B cell (primary cell): ENCODE measurements at regions of chr22 and their contacts with region 1.

Region 1: GRCh38 chr22:32676196-32676595 is 125.3 kb upstream of the TIMP3 start:
- DNase-seq: no peak
- ATAC-seq: no peak
- H3K4me3 ChIP-seq: no peak overlapping the region
- H3K4me3 Mint-ChIP-seq: no peak overlapping the region
- H3K27ac ChIP-seq: no peak overlapping the region
- H3K27ac Mint-ChIP-seq: no peak overlapping the region
- H3K4me1 ChIP-seq: no peaks in the 10 kb centered on the region
- H3K4me1 Mint-ChIP-seq: no peaks in the 10 kb centered on the region
- H3K27me3 ChIP-seq: no peaks in the 10 kb centered on the region
- H3K27me3 Mint-ChIP-seq: peaks cover 4% of the 10 kb centered on the region
- CTCF ChIP-seq: no peak

Region 2: DNA sequence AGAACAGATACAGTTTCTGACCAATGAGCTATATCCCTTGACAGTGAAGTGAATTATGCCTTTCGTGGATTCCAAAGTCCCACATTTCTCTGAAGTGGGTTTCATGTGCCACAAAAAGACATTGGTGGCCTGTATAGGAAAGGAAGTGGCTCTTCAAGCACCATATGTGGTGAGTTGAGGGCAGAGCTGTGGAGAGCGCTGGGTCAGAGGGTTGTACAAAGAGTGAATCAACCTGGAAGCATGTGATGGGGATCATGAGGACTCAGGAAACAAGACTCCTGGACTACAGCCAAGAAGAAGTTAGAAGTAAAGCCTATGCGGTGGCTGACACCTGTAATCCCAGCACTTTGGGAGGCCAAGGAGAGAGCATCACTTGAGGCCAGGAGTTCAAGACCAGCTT is 420.5 kb before region 1 on chr22:
- CTCF ChIA-PET with region 1: no interaction called
- POLR2A ChIA-PET with region 1: interaction called, 11 read pairs
- intact Hi-C with region 1: no loop called
- DNase-seq: no peak
- ATAC-seq: no peak
- H3K4me3 ChIP-seq: no peak overlapping the region
- H3K4me3 Mint-ChIP-seq: no peak overlapping the region
- H3K27ac ChIP-seq: no peak overlapping the region
- H3K27ac Mint-ChIP-seq: no peak overlapping the region
- H3K4me1 ChIP-seq: no peaks in the 10 kb centered on the region
- H3K4me1 Mint-ChIP-seq: no peaks in the 10 kb centered on the region
- H3K27me3 ChIP-seq: peaks cover 0 to 4% (median 0%) of the 10 kb centered on the region in 4 experiments
- H3K27me3 Mint-ChIP-seq: peaks cover 34% of the 10 kb centered on the region
- CTCF ChIP-seq: no peak